ENCODE measurements at regions of chr20 and their contacts with region 1.

Region 1: GRCh38 chr20:51220293-51220706 is 197.4 kb upstream of the KCNG1 start:
- DNase-seq: peak in 1 of 2 donors; percentile 31
- ATAC-seq: no peak
- H3K4me3 ChIP-seq: no peak overlapping the region
- H3K27ac ChIP-seq: no peak overlapping the region
- H3K4me1 ChIP-seq: no peaks in the 10 kb centered on the region
- H3K27me3 ChIP-seq: peaks cover 0 to 44% (median 15%) of the 10 kb centered on the region in 3 donors
- CTCF ChIP-seq: peak; percentile 52

Region 2: DNA sequence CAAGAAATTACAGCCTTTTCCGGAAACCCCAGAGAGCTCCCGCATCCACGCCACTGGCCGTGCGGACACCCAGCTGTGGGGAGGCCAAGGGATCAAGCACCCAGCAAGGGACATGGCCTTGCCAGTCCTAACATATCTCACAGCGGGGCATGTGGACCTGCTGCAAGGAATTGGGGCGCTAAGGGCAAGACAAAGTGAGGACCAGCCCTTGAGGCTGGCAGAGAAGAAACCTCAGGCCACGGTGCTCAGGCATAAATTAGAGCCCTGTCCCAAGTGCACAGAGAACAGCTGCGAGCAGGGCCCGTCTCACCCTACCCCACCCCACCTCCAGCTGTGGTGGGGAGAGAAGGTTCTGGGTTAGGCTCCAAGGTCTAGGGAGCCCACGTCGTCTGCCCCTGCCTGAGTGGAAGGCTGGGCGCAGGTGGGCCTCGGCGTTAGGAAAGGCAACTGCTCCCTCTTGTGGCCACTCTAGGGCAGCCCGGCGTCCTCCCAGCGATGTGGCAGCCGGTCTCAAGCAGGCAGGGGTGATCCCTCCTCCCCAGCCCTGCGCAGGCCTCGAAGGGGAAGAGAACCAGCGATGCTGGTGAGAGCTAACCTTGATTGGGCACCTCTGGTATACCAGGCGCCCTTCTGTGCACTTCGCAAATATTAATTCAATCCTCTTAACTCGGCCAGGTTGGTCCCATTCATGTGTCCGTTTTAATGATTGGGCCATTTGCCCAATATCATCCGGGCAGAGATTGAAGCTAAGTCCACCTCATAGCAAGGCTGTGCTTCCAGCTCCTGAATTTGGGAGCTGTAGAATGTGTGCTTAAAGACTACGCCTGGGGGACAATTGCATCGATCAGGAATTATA is 86.4 kb after region 1 on chr20:
- intact Hi-C with region 1: loop called in 1 of 2 experiments (anchors 5 kb)
- DNase-seq: peak; percentile 66 to 83
- ATAC-seq: peak; percentile 85 to 96 (median 92)
- H3K4me3 ChIP-seq: no peak overlapping the region
- H3K27ac ChIP-seq: no peak overlapping the region
- H3K4me1 ChIP-seq: no peaks in the 10 kb centered on the region
- H3K27me3 ChIP-seq: peaks cover 0 to 1% (median 0%) of the 10 kb centered on the region in 3 donors
- CTCF ChIP-seq: peak; percentile 90

Measured in psoas muscle (tissue), 8 donors.